H1 (cell line): ENCODE measurements at regions of chr19 and their contacts with region 1.

Region 1: GRCh38 chr19:13069415-13070359 is 33.0 kb downstream of the LYL1 start:
- DNase-seq: no peak
- H3K4me3 ChIP-seq: no peak overlapping the region
- H3K27ac ChIP-seq: no peak overlapping the region
- H3K4me1 ChIP-seq: no peaks in the 10 kb centered on the region; a peak in 1 of 7 replicates
- H3K27me3 ChIP-seq: peaks cover 0 to 5% (median 2%) of the 10 kb centered on the region in 4 experiments; a peak in 3 of 7 replicates
- CTCF ChIP-seq: no peak
- EP300 ChIP-seq: no peak
- POLR2A ChIP-seq: no peak
- RAD21 ChIP-seq: no peak

Region 2: DNA sequence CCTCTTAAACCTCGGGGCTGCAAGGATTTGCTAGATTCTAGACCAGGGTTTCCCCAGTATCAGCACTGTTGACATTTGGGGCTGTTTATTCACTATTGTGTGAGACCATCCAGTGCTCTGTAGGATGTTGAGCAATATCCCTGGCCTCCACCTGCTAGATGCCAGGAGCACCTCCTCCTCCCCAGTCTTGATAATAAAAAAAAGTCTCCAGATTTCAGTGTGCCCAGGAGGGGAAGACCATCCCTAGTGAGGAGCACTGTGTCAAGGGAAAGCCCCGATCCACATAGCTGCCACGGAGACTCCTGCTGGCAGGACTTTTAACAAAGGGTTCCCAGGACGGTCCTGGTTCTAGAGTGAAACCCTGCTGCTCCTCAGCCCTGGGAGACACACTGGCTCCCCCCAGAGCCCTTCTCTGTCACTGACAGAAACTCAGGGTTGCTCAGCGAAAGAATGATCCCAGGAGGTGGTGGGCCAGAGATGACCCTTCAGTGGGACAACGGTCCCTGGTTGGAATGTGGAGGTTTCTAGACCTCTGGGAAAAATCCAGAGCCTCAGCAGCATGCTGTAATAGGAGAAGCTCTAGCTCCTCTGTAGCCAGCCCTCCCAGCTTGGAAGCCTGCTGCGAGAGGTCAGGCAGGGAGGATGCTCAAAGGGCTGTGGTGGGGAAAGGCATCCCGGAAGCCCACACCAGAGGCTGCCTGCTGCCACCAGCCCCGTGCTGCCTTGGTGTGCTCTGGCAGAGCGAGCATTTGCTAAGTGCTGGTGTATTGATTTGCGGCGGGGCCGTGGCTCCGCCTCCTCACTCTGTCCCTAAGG is 12.7 kb after region 1 on chr19:
- CTCF ChIA-PET with region 1: interaction called, 1,145 read pairs
- POLR2A ChIA-PET with region 1: interaction called, 5 read pairs
- DNase-seq: no peak
- H3K4me3 ChIP-seq: no peak overlapping the region
- H3K27ac ChIP-seq: no peak overlapping the region
- H3K4me1 ChIP-seq: peaks cover 11 to 29% (median 19%) of the 10 kb centered on the region in 4 experiments
- H3K27me3 ChIP-seq: peaks cover 0 to 16% (median 8%) of the 10 kb centered on the region in 4 experiments; a peak in 3 of 7 replicates
- CTCF ChIP-seq: peak; percentile 22 to 42 (median 36); a peak in 3 of 4 replicates
- EP300 ChIP-seq: no peak
- POLR2A ChIP-seq: no peak
- RAD21 ChIP-seq: peak; percentile 48 to 54

Region 3: GRCh38 chr19:13109361-13110098 is 39.8 kb after region 1 on chr19:
- CTCF ChIA-PET with region 1: no interaction called
- POLR2A ChIA-PET with region 1: no interaction called
- DNase-seq: no peak
- H3K4me3 ChIP-seq: no peak overlapping the region
- H3K27ac ChIP-seq: no peak overlapping the region
- H3K4me1 ChIP-seq: no peaks in the 10 kb centered on the region
- H3K27me3 ChIP-seq: no peaks in the 10 kb centered on the region
- CTCF ChIP-seq: no peak
- EP300 ChIP-seq: no peak
- POLR2A ChIP-seq: no peak
- RAD21 ChIP-seq: no peak